Endothelial cell of umbilical vein (primary cell): ENCODE measurements at regions of chr10 and their contacts with region 1.

Region 1: GRCh38 chr10:15719899-15720634 is at the start of gene ITGA8:
- DNase-seq: peak; percentile 22
- H3K4me3 ChIP-seq: peak within 1 kb of the TSS in 2 of 3 experiments; percentile 6 to 25
- H3K27ac ChIP-seq: no peak within 1 kb of the TSS
- H3K4me1 ChIP-seq: peaks cover 4% of the 10 kb centered on the region
- H3K27me3 ChIP-seq: peaks cover 27 to 30% of the 10 kb centered on the region in 2 experiments
- CTCF ChIP-seq: peak; percentile 50 to 53
- POLR2A ChIP-seq: no peak
- total RNA-seq, gene ITGA8: 0.12 and 0.40 TPM in 2 replicates

Region 2: GRCh38 chr10:15433850-15434537 is 286.1 kb before region 1 on chr10:
- CTCF ChIA-PET with region 1: interaction called, 57 read pairs
- POLR2A ChIA-PET with region 1: no interaction called
- dilution Hi-C with region 1: no loop called
- intact Hi-C with region 1: loop called (anchors 1 kb)
- DNase-seq: peak; percentile 47
- H3K4me3 ChIP-seq: peak overlapping the region; percentile 26 to 69 (median 52)
- H3K27ac ChIP-seq: no peak overlapping the region
- H3K4me1 ChIP-seq: peaks cover 5% of the 10 kb centered on the region
- H3K27me3 ChIP-seq: peaks cover 0 to 4% of the 10 kb centered on the region in 2 experiments
- CTCF ChIP-seq: peak; percentile 51 to 59
- POLR2A ChIP-seq: no peak

Region 3: GRCh38 chr10:15461353-15462108 is 258.5 kb before region 1 on chr10:
- CTCF ChIA-PET with region 1: interaction called, 14 read pairs
- POLR2A ChIA-PET with region 1: no interaction called
- dilution Hi-C with region 1: no loop called
- intact Hi-C with region 1: loop called (anchors 1 kb)
- DNase-seq: peak; percentile 22
- H3K4me3 ChIP-seq: no peak overlapping the region
- H3K27ac ChIP-seq: no peak overlapping the region
- H3K4me1 ChIP-seq: peaks cover 4% of the 10 kb centered on the region
- H3K27me3 ChIP-seq: peaks cover 0 to 2% of the 10 kb centered on the region in 2 experiments
- CTCF ChIP-seq: peak; percentile 15 to 18
- POLR2A ChIP-seq: no peak

Region 4: GRCh38 chr10:15585303-15585715 is 134.8 kb before region 1 on chr10:
- CTCF ChIA-PET with region 1: interaction called, 89 read pairs
- POLR2A ChIA-PET with region 1: no interaction called
- dilution Hi-C with region 1: no loop called
- intact Hi-C with region 1: loop called (anchors 1 kb)
- DNase-seq: peak; percentile 80
- H3K4me3 ChIP-seq: no peak overlapping the region
- H3K27ac ChIP-seq: no peak overlapping the region
- H3K4me1 ChIP-seq: peaks cover 9% of the 10 kb centered on the region
- H3K27me3 ChIP-seq: no peaks in the 10 kb centered on the region
- CTCF ChIP-seq: peak; percentile 89 to 93
- POLR2A ChIP-seq: no peak

Region 5: GRCh38 chr10:15652117-15652516 is 68.0 kb before region 1 on chr10:
- CTCF ChIA-PET with region 1: interaction called, 18 read pairs
- POLR2A ChIA-PET with region 1: no interaction called
- dilution Hi-C with region 1: no loop called
- intact Hi-C with region 1: loop called (anchors 1 kb)
- DNase-seq: no peak
- H3K4me3 ChIP-seq: no peak overlapping the region
- H3K27ac ChIP-seq: no peak overlapping the region
- H3K4me1 ChIP-seq: no peaks in the 10 kb centered on the region
- H3K27me3 ChIP-seq: no peaks in the 10 kb centered on the region
- CTCF ChIP-seq: no peak
- POLR2A ChIP-seq: no peak